Left cardiac atrium (tissue), 4 donors: ENCODE measurements at regions of chr7 and their contacts with region 1.

Region 1: DNA sequence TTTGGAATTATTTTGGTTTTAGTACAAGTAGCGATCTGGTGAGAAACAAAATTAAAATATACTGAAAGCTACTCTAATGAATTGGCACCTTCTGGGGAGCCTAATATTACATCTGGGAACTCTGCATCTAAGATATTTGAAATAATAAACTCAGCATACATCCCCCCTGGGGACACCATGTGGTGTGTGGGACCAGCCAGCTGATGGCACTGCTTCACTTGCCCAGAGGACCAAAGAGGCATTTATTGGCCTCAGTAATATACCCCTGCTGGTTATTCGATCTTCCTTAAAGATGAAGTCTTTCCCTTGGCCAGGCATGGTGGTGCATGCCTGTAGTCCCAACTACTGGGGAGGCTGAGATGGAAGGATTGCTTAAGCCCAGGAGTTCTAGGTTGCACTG is 195.1 kb upstream of the AUTS2 start:
- DNase-seq: no peak
- ATAC-seq: peak in 1 of 2 donors; percentile 31

Region 2: GRCh38 chr7:69932034-69932628 is 529.0 kb after region 1 on chr7:
- intact Hi-C with region 1: loop called in 1 of 2 experiments (anchors 10 kb)
- DNase-seq: no peak
- ATAC-seq: peak; percentile 30 to 58